A549 (cell line): ENCODE measurements at regions of chr6 and their contacts with region 1.

Region 1: GRCh38 chr6:133923938-133924593 is 29.0 kb upstream of the TBPL1 start:
- DNase-seq: peak; percentile 58 to 78
- ATAC-seq: peak; percentile 91 to 95
- H3K4me3 ChIP-seq: no peak overlapping the region
- H3K27ac ChIP-seq: no peak overlapping the region
- H3K4me1 ChIP-seq: no peaks in the 10 kb centered on the region
- CTCF ChIP-seq: peak; percentile 87
- EP300 ChIP-seq: no peak
- POLR2A ChIP-seq: no peak
- RAD21 ChIP-seq: peak; percentile 88 to 94

Region 2: GRCh38 chr6:133837801-133838349 is 86.2 kb before region 1 on chr6:
- CTCF ChIA-PET with region 1: interaction called, 14 read pairs
- POLR2A ChIA-PET with region 1: no interaction called
- DNase-seq: peak; percentile 28 to 81
- ATAC-seq: peak; percentile 96 to 97
- H3K4me3 ChIP-seq: peak overlapping the region; percentile 56
- H3K27ac ChIP-seq: peak overlapping the region; percentile 94 to 96
- H3K4me1 ChIP-seq: peaks cover 20% of the 10 kb centered on the region; the same call in 1 of the 3 replicates
- CTCF ChIP-seq: peak; percentile 89
- EP300 ChIP-seq: no peak
- POLR2A ChIP-seq: no peak
- RAD21 ChIP-seq: peak; percentile 58 to 74

Region 3: GRCh38 chr6:133945158-133945557 is 21.1 kb after region 1 on chr6:
- CTCF ChIA-PET with region 1: interaction called, 19 read pairs
- POLR2A ChIA-PET with region 1: no interaction called
- DNase-seq: peak in 1 of 2 experiments; percentile 3
- ATAC-seq: peak; percentile 54 to 57; a peak in 3 of 6 replicates
- H3K4me3 ChIP-seq: no peak overlapping the region
- H3K27ac ChIP-seq: no peak overlapping the region
- H3K4me1 ChIP-seq: no peaks in the 10 kb centered on the region
- CTCF ChIP-seq: no peak
- EP300 ChIP-seq: no peak
- POLR2A ChIP-seq: no peak
- RAD21 ChIP-seq: no peak

Region 4: DNA sequence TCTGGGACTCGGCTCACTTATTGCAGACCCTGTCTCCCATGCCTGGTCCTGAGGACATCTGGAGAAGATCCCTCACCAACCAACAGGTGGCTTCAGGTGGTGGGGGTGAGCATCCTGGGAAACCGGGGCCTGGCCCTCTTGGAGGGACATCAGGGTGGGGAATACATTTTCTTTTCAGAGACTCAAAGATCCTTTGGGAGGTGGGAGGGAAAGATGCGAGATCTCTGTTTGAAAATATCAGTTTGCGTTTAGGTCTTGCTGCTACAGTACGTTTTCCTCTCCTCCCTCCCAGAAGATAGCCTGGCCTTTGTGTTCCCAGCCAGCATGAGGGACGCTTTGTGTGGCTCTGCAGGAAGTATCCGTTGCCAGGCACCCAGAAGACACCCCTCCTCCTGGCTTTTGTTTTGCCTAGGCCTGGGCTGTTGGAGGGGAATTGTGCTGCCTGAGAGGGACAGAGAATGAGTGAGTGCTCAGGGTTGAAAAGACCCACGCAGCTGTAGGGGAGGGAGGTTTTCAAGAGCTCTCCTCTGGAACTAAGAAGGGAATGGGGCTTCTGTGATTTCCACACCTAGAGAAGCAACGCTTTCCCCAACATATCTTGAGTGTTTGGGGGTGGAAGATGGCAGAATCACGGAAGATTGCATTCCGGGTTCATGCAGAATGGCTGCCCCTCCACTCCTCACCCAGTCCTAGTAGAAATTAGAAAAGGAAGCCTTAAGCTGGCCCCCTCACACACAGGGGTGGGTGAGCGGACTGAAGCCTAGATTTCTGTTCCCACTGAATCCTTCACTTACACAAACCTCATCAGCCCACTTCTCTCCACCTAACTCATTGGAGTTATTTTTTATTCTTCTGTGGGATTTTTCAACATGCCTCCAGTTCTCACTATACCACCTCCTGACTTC is 150.3 kb after region 1 on chr6:
- CTCF ChIA-PET with region 1: interaction called, 17 read pairs
- POLR2A ChIA-PET with region 1: no interaction called
- DNase-seq: no peak
- ATAC-seq: no peak
- H3K4me3 ChIP-seq: no peak overlapping the region
- H3K27ac ChIP-seq: no peak overlapping the region
- H3K4me1 ChIP-seq: no peaks in the 10 kb centered on the region
- CTCF ChIP-seq: no peak
- EP300 ChIP-seq: no peak
- POLR2A ChIP-seq: no peak
- RAD21 ChIP-seq: no peak

Region 5: GRCh38 chr6:134123666-134124208 is 199.7 kb after region 1 on chr6:
- CTCF ChIA-PET with region 1: interaction called, 10 read pairs
- POLR2A ChIA-PET with region 1: no interaction called
- DNase-seq: peak; percentile 19 to 90
- ATAC-seq: peak; percentile 98 to 99
- H3K4me3 ChIP-seq: no peak overlapping the region
- H3K27ac ChIP-seq: peak overlapping the region; percentile 39 to 40; a peak in 3 of 6 replicates
- H3K4me1 ChIP-seq: no peaks in the 10 kb centered on the region
- CTCF ChIP-seq: peak; percentile 78
- EP300 ChIP-seq: no peak
- POLR2A ChIP-seq: no peak
- RAD21 ChIP-seq: peak; percentile 54 to 56